CD8-positive, alpha-beta T cell (primary cell): ENCODE measurements at regions of chr2 and their contacts with region 1.

Region 1: GRCh38 chr2:44479122-44479887 is 117.6 kb downstream of the CAMKMT start:
- DNase-seq: peak in 8 of 9 experiments; percentile 1 to 82 (median 26)
- ATAC-seq: peak; percentile 100
- H3K4me3 ChIP-seq: no peak overlapping the region
- H3K4me3 Mint-ChIP-seq: no peak overlapping the region
- H3K27ac ChIP-seq: no peak overlapping the region
- H3K27ac Mint-ChIP-seq: no peak overlapping the region
- H3K4me1 ChIP-seq: no peaks in the 10 kb centered on the region
- H3K4me1 Mint-ChIP-seq: peaks cover 9% of the 10 kb centered on the region
- H3K27me3 ChIP-seq: peaks cover 0 to 2% of the 10 kb centered on the region in 2 experiments
- H3K27me3 Mint-ChIP-seq: no peaks in the 10 kb centered on the region
- CTCF ChIP-seq: peak; percentile 100

Region 2: GRCh38 chr2:43226558-43226954 is 1252.7 kb before region 1 on chr2 and contains the start of gene ZFP36L2:
- CTCF ChIA-PET with region 1: no interaction called
- POLR2A ChIA-PET with region 1: no interaction called
- intact Hi-C with region 1: no loop called
- DNase-seq: peak; percentile 89 to 99 (median 96)
- ATAC-seq: peak; percentile 58
- H3K4me3 ChIP-seq: peak within 1 kb of the TSS; percentile 89 to 94
- H3K4me3 Mint-ChIP-seq: peak within 1 kb of the TSS; percentile 96
- H3K27ac ChIP-seq: peak within 1 kb of the TSS; percentile 81 to 92
- H3K27ac Mint-ChIP-seq: peak within 1 kb of the TSS; percentile 94
- H3K4me1 ChIP-seq: peaks cover 23% of the 10 kb centered on the region
- H3K4me1 Mint-ChIP-seq: peaks cover 28% of the 10 kb centered on the region
- H3K27me3 ChIP-seq: no peaks in the 10 kb centered on the region
- H3K27me3 Mint-ChIP-seq: no peaks in the 10 kb centered on the region
- CTCF ChIP-seq: no peak
- total RNA-seq, gene ZFP36L2: 1,270 to 1,311 TPM

Region 3: GRCh38 chr2:43648994-43649701 is 830.2 kb before region 1 on chr2:
- CTCF ChIA-PET with region 1: no interaction called
- POLR2A ChIA-PET with region 1: no interaction called
- intact Hi-C with region 1: no loop called
- DNase-seq: no peak
- ATAC-seq: no peak
- H3K4me3 ChIP-seq: no peak overlapping the region
- H3K4me3 Mint-ChIP-seq: no peak overlapping the region
- H3K27ac ChIP-seq: no peak overlapping the region
- H3K27ac Mint-ChIP-seq: no peak overlapping the region
- H3K4me1 ChIP-seq: no peaks in the 10 kb centered on the region
- H3K4me1 Mint-ChIP-seq: no peaks in the 10 kb centered on the region
- H3K27me3 ChIP-seq: no peaks in the 10 kb centered on the region
- H3K27me3 Mint-ChIP-seq: peaks cover 16% of the 10 kb centered on the region
- CTCF ChIP-seq: no peak

Region 4: DNA sequence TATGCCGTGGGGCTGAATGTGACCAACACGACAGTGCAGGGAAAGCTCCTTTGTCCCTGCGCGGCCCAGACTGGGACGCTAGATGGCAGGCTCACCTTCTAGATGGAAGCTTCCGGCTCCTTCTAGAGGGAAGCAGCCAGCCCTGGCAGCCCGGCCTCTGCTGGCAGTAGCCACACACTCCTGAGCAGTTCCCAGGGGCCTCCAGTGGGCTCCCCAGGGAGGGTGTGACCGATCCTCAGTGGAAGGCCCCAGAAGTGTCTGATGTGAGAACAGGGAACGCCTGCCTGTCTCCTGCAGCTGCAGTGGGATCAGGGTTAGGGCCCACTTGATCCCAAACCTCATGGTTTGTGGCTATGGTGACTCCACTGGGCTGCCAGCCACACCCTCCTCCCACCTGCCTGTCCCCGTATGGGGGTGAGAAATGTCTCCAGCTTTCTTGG is 435.0 kb before region 1 on chr2:
- CTCF ChIA-PET with region 1: interaction called, 11 read pairs
- POLR2A ChIA-PET with region 1: no interaction called
- intact Hi-C with region 1: loop called (anchors 1 kb)
- DNase-seq: peak; percentile 50 to 84 (median 73)
- ATAC-seq: peak; percentile 99
- H3K4me3 ChIP-seq: no peak overlapping the region
- H3K4me3 Mint-ChIP-seq: no peak overlapping the region
- H3K27ac ChIP-seq: no peak overlapping the region
- H3K27ac Mint-ChIP-seq: no peak overlapping the region
- H3K4me1 ChIP-seq: no peaks in the 10 kb centered on the region
- H3K4me1 Mint-ChIP-seq: peaks cover 2% of the 10 kb centered on the region
- H3K27me3 ChIP-seq: no peaks in the 10 kb centered on the region
- H3K27me3 Mint-ChIP-seq: peaks cover 5% of the 10 kb centered on the region
- CTCF ChIP-seq: peak; percentile 76

Region 5: DNA sequence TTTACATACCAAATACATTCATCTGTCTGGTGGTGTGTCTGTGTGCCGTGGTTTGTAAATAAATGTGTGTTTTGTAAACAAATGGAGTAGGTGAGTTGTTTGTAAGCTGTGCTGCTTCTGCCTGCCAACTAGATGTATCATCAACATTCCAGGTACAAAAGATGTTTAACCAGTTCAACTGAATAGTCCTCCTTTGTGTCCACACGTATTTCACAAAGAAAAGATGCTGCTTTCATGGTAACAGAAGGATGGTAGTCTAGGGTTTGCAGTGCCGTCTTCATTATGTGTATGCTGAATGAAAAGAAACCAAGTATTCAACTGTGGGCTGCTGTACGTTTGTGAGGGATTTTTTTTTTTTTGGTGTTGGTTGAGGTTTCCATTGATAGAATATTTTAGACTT is 45.4 kb before region 1 on chr2:
- CTCF ChIA-PET with region 1: interaction called, 11 read pairs
- POLR2A ChIA-PET with region 1: no interaction called
- intact Hi-C with region 1: no loop called
- DNase-seq: no peak
- ATAC-seq: no peak
- H3K4me3 ChIP-seq: no peak overlapping the region
- H3K4me3 Mint-ChIP-seq: no peak overlapping the region
- H3K27ac ChIP-seq: no peak overlapping the region
- H3K27ac Mint-ChIP-seq: no peak overlapping the region
- H3K4me1 ChIP-seq: peaks cover 11% of the 10 kb centered on the region
- H3K4me1 Mint-ChIP-seq: peaks cover 29% of the 10 kb centered on the region
- H3K27me3 ChIP-seq: no peaks in the 10 kb centered on the region
- H3K27me3 Mint-ChIP-seq: no peaks in the 10 kb centered on the region
- CTCF ChIP-seq: no peak

Region 6: GRCh38 chr2:44462934-44463849 is 16.1 kb before region 1 on chr2:
- CTCF ChIA-PET with region 1: interaction called, 32 read pairs
- POLR2A ChIA-PET with region 1: no interaction called
- intact Hi-C with region 1: no loop called
- DNase-seq: no peak
- ATAC-seq: no peak
- H3K4me3 ChIP-seq: no peak overlapping the region
- H3K4me3 Mint-ChIP-seq: no peak overlapping the region
- H3K27ac ChIP-seq: no peak overlapping the region
- H3K27ac Mint-ChIP-seq: no peak overlapping the region
- H3K4me1 ChIP-seq: no peaks in the 10 kb centered on the region
- H3K4me1 Mint-ChIP-seq: no peaks in the 10 kb centered on the region
- H3K27me3 ChIP-seq: no peaks in the 10 kb centered on the region
- H3K27me3 Mint-ChIP-seq: no peaks in the 10 kb centered on the region
- CTCF ChIP-seq: no peak

Region 7: GRCh38 chr2:44515416-44515815 is 36.1 kb after region 1 on chr2:
- CTCF ChIA-PET with region 1: interaction called, 11 read pairs
- POLR2A ChIA-PET with region 1: no interaction called
- intact Hi-C with region 1: no loop called
- DNase-seq: no peak
- ATAC-seq: no peak
- H3K4me3 ChIP-seq: no peak overlapping the region
- H3K4me3 Mint-ChIP-seq: no peak overlapping the region
- H3K27ac ChIP-seq: no peak overlapping the region
- H3K27ac Mint-ChIP-seq: no peak overlapping the region
- H3K4me1 ChIP-seq: no peaks in the 10 kb centered on the region
- H3K4me1 Mint-ChIP-seq: no peaks in the 10 kb centered on the region
- H3K27me3 ChIP-seq: no peaks in the 10 kb centered on the region
- H3K27me3 Mint-ChIP-seq: no peaks in the 10 kb centered on the region
- CTCF ChIP-seq: no peak

Region 8: GRCh38 chr2:45794134-45794617 is 1314.9 kb after region 1 on chr2:
- CTCF ChIA-PET with region 1: no interaction called
- POLR2A ChIA-PET with region 1: no interaction called
- intact Hi-C with region 1: no loop called
- DNase-seq: no peak
- ATAC-seq: no peak
- H3K4me3 ChIP-seq: no peak overlapping the region
- H3K4me3 Mint-ChIP-seq: no peak overlapping the region
- H3K27ac ChIP-seq: no peak overlapping the region
- H3K27ac Mint-ChIP-seq: no peak overlapping the region
- H3K4me1 ChIP-seq: no peaks in the 10 kb centered on the region
- H3K4me1 Mint-ChIP-seq: no peaks in the 10 kb centered on the region
- H3K27me3 ChIP-seq: no peaks in the 10 kb centered on the region
- H3K27me3 Mint-ChIP-seq: no peaks in the 10 kb centered on the region
- CTCF ChIP-seq: no peak